ENCODE measurements at regions of chr11 and their contacts with region 1.

Region 1: GRCh38 chr11:7571640-7572000 is 57.8 kb downstream of the PPFIBP2 start:
- DNase-seq: peak; percentile 86
- ATAC-seq: peak; percentile 84
- H3K4me3 Mint-ChIP-seq: no peak overlapping the region
- H3K27ac Mint-ChIP-seq: peak overlapping the region; percentile 58; the same call in 1 of the 2 replicates
- H3K4me1 Mint-ChIP-seq: peaks cover 64% of the 10 kb centered on the region
- H3K27me3 Mint-ChIP-seq: no peaks in the 10 kb centered on the region
- CTCF ChIP-seq: peak; percentile 74; the same call in 1 of the 2 replicates

Region 2: DNA sequence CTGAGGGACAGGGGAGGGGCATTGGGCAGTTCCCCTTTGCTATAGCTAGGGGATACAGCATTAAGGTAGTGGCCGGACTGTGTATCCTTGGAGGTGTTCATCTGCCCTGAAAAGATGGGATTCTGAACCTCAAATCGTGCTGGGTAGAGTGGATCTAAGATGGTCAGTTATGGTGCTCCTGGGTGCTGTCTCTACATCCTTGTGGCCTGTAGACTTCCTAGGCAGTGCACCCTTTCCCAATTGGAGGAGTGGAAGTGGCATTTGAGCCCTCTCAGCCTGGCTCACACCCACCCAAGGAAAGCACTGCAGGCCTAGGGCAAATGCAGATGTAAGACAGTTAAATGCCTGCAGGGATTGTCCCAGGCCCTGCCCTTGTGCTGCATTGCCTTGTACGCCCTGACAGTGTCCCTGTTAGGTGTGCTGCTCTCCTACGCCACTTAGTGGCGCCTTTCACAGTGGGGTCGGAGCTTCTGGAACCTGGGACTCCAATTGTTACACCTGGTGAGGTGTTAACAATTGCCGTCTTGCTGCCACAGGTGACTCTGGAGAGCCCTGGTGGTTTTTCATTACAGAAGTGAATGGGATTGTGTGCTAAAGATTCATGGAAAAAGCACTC is 22.9 kb before region 1 on chr11:
- CTCF ChIA-PET with region 1: interaction called, 19 read pairs
- POLR2A ChIA-PET with region 1: no interaction called
- DNase-seq: peak; percentile 84
- ATAC-seq: peak; percentile 98
- H3K4me3 Mint-ChIP-seq: no peak overlapping the region
- H3K27ac Mint-ChIP-seq: 0 out of 2 replicates have a peak overlapping the region, but pooled peaks have one; percentile 14
- H3K4me1 Mint-ChIP-seq: peaks cover 37% of the 10 kb centered on the region
- H3K27me3 Mint-ChIP-seq: no peaks in the 10 kb centered on the region
- CTCF ChIP-seq: peak; percentile 45; the same call in 1 of the 2 replicates

Region 3: DNA sequence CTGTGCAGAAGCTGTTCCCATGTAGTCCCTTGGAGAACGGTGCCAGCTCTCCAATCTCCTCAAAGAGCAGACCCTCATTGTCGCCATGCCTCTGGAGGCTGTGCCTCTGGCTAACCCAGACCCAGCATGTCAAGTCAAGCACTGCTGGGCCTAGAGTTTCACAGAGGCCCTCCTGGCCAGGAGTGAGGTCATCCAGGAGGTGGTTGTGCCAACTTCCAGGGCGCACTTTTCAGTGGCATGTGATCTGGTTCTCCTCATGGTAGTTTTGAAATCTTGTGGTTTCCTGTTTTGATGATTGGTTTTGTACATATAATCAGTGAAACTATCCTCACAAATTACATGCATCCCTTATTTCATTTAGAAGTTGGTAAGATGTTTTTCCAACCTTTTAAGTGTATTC is 21.1 kb after region 1 on chr11:
- CTCF ChIA-PET with region 1: interaction called, 26 read pairs
- POLR2A ChIA-PET with region 1: no interaction called
- DNase-seq: no peak
- ATAC-seq: no peak
- H3K4me3 Mint-ChIP-seq: no peak overlapping the region
- H3K27ac Mint-ChIP-seq: peak overlapping the region; percentile 19; the same call in 1 of the 2 replicates
- H3K4me1 Mint-ChIP-seq: peaks cover 55% of the 10 kb centered on the region
- H3K27me3 Mint-ChIP-seq: no peaks in the 10 kb centered on the region
- CTCF ChIP-seq: no peak

Region 4: DNA sequence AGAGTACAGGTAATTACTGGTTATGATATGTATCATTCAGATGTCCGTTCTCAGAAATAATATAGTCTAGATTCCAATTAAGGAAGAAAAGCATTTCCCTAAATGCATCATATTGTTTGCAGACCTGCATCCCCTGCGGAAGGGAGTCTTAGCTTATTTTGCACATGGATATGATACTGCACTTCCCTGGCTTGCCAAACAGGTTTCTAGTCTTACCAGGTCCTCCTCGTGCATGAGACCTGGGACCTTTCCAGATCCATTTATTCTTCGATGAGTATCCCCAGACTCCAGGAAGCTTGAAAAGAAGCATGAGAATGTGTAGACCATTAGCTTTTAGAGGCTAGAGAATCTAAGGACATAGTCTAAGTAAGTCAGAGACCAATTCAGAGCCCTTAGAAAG is 71.1 kb after region 1 on chr11:
- CTCF ChIA-PET with region 1: interaction called, 31 read pairs
- POLR2A ChIA-PET with region 1: no interaction called
- DNase-seq: no peak
- ATAC-seq: no peak
- H3K4me3 Mint-ChIP-seq: no peak overlapping the region
- H3K27ac Mint-ChIP-seq: no peak overlapping the region
- H3K4me1 Mint-ChIP-seq: peaks cover 26% of the 10 kb centered on the region
- H3K27me3 Mint-ChIP-seq: no peaks in the 10 kb centered on the region
- CTCF ChIP-seq: no peak

Region 5: GRCh38 chr11:7688238-7688826 is 116.7 kb after region 1 on chr11:
- CTCF ChIA-PET with region 1: interaction called, 15 read pairs
- POLR2A ChIA-PET with region 1: no interaction called
- DNase-seq: peak; percentile 18
- ATAC-seq: peak; percentile 69
- H3K4me3 Mint-ChIP-seq: no peak overlapping the region
- H3K27ac Mint-ChIP-seq: no peak overlapping the region
- H3K4me1 Mint-ChIP-seq: peaks cover 29% of the 10 kb centered on the region
- H3K27me3 Mint-ChIP-seq: no peaks in the 10 kb centered on the region; the same call in 1 of the 2 replicates
- CTCF ChIP-seq: peak; percentile 83

Measured in WTC11 (cell line).